Mammary epithelial cell (primary cell): ENCODE measurements at regions of chr5 and their contacts with region 1.

Region 1: DNA sequence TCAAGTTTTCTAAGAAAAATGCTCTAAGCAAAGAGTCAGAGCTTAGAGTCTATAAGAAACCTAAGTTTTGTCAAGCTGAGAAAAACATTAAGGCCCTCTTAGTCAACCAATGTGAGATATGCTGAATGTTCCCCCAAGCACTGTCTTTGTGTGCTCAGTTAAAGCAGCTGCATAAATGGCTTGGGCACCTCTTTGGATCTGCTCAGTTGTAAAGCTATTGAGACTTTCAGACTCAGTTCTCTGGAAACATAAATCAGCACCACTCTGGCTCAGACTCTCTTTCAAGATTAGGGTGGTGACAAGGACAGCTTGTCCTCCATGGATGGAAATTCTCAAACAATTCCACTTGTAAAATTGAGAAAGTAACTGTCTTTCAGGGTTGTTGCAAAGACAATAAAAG is 807.9 kb downstream of the PRELID2 start:
- DNase-seq: no peak
- H3K4me3 ChIP-seq: no peak overlapping the region
- H3K27ac ChIP-seq: no peak overlapping the region
- H3K4me1 ChIP-seq: no peaks in the 10 kb centered on the region
- H3K27me3 ChIP-seq: no peaks in the 10 kb centered on the region
- CTCF ChIP-seq: no peak

Region 2: GRCh38 chr5:144864118-144864517 is 163.2 kb before region 1 on chr5:
- CTCF ChIA-PET with region 1: no interaction called
- dilution Hi-C with region 1: no loop called
- in situ Hi-C with region 1: no loop called
- intact Hi-C with region 1: no loop called
- DNase-seq: no peak
- H3K4me3 ChIP-seq: no peak overlapping the region
- H3K27ac ChIP-seq: no peak overlapping the region
- H3K4me1 ChIP-seq: no peaks in the 10 kb centered on the region
- H3K27me3 ChIP-seq: no peaks in the 10 kb centered on the region
- CTCF ChIP-seq: no peak

Region 3: GRCh38 chr5:144971108-144971850 is 56.0 kb before region 1 on chr5:
- CTCF ChIA-PET with region 1: interaction called, 17 read pairs
- dilution Hi-C with region 1: no loop called
- in situ Hi-C with region 1: no loop called
- intact Hi-C with region 1: no loop called
- DNase-seq: no peak
- H3K4me3 ChIP-seq: no peak overlapping the region
- H3K27ac ChIP-seq: no peak overlapping the region
- H3K4me1 ChIP-seq: no peaks in the 10 kb centered on the region
- H3K27me3 ChIP-seq: no peaks in the 10 kb centered on the region
- CTCF ChIP-seq: no peak